Lower lobe of right lung (tissue), 2 donors: ENCODE measurements at regions of chr4 and their contacts with region 1.

Region 1: DNA sequence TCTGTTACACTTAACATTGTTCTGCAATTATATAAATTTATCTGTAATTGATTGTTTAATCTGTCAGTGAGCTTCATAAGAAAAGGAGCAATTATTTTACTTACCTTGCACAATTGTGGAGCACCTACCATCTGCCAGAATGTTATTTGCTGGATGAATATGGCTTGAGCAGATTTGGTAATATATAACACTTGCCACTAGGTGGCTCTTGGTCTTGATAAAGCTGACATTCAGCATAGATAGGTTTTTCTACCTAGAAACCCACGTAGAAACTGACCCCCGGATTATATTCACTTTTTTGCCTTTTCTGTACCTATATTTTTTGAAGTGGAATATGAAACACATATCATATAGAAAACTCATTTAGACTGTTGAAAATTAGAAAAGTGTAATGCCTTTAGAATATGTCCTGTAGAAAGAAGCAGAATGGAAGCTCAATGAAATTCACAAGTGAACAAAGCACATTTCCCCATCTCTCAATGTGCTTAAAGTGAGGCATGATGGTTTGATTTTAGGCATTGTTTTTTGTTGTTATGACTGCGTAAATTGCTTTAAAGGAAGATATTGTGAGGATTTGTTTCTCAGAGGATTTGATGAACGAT is 9.5 kb downstream of the RBPJ start:
- DNase-seq: no peak
- ATAC-seq: peak; percentile 69 to 87
- H3K4me3 ChIP-seq: no peak overlapping the region
- H3K27ac ChIP-seq: no peak overlapping the region
- H3K4me1 ChIP-seq: peaks cover 25% of the 10 kb centered on the region
- H3K27me3 ChIP-seq: no peaks in the 10 kb centered on the region
- CTCF ChIP-seq: peak; percentile 69

Region 2: GRCh38 chr4:25386926-25387325 is 943.4 kb before region 1 on chr4:
- intact Hi-C with region 1: no loop called
- DNase-seq: no peak
- ATAC-seq: no peak
- H3K4me3 ChIP-seq: no peak overlapping the region
- H3K27ac ChIP-seq: no peak overlapping the region
- H3K4me1 ChIP-seq: no peaks in the 10 kb centered on the region
- H3K27me3 ChIP-seq: no peaks in the 10 kb centered on the region
- CTCF ChIP-seq: no peak

Region 3: GRCh38 chr4:26022346-26023202 is 307.7 kb before region 1 on chr4:
- intact Hi-C with region 1: no loop called
- DNase-seq: no peak
- ATAC-seq: peak; percentile 81 to 86
- H3K4me3 ChIP-seq: peak overlapping the region; percentile 28
- H3K27ac ChIP-seq: peak overlapping the region; percentile 71
- H3K4me1 ChIP-seq: peaks cover 33% of the 10 kb centered on the region
- H3K27me3 ChIP-seq: no peaks in the 10 kb centered on the region
- CTCF ChIP-seq: no peak

Region 4: GRCh38 chr4:26404743-26405206 is 74.5 kb after region 1 on chr4:
- intact Hi-C with region 1: loop called (anchors 10 kb)
- DNase-seq: no peak
- ATAC-seq: no peak
- H3K4me3 ChIP-seq: no peak overlapping the region
- H3K27ac ChIP-seq: no peak overlapping the region
- H3K4me1 ChIP-seq: peaks cover 4% of the 10 kb centered on the region
- H3K27me3 ChIP-seq: no peaks in the 10 kb centered on the region
- CTCF ChIP-seq: no peak